GM12878 (cell line): ENCODE measurements at regions of chr2 and their contacts with region 1.

Region 1: GRCh38 chr2:78676921-78677696 is 348.4 kb upstream of the REG3G start:
- DNase-seq: no peak
- ATAC-seq: no peak
- H3K4me3 ChIP-seq: no peak overlapping the region
- H3K27ac ChIP-seq: no peak overlapping the region
- H3K4me1 ChIP-seq: no peaks in the 10 kb centered on the region
- H3K27me3 ChIP-seq: no peaks in the 10 kb centered on the region
- CTCF ChIP-seq: no peak
- EP300 ChIP-seq: no peak
- POLR2A ChIP-seq: no peak
- RAD21 ChIP-seq: no peak

Region 2: GRCh38 chr2:78118037-78118436 is 559.1 kb before region 1 on chr2:
- CTCF ChIA-PET with region 1: no interaction called
- POLR2A ChIA-PET with region 1: no interaction called
- RAD21 ChIA-PET with region 1: no interaction called
- SMC1A ChIA-PET with region 1: no interaction called
- in situ Hi-C with region 1: no loop called
- intact Hi-C with region 1: no loop called
- DNase-seq: no peak
- ATAC-seq: no peak
- H3K4me3 ChIP-seq: no peak overlapping the region
- H3K27ac ChIP-seq: no peak overlapping the region
- H3K4me1 ChIP-seq: no peaks in the 10 kb centered on the region
- H3K27me3 ChIP-seq: no peaks in the 10 kb centered on the region
- CTCF ChIP-seq: no peak
- EP300 ChIP-seq: no peak
- POLR2A ChIP-seq: no peak
- RAD21 ChIP-seq: no peak

Region 3: GRCh38 chr2:78654941-78655340 is 22.2 kb before region 1 on chr2:
- CTCF ChIA-PET with region 1: interaction called, 10 read pairs
- POLR2A ChIA-PET with region 1: no interaction called
- RAD21 ChIA-PET with region 1: no interaction called
- SMC1A ChIA-PET with region 1: no interaction called
- in situ Hi-C with region 1: no loop called
- intact Hi-C with region 1: no loop called
- DNase-seq: no peak
- ATAC-seq: no peak
- H3K4me3 ChIP-seq: no peak overlapping the region
- H3K27ac ChIP-seq: no peak overlapping the region
- H3K4me1 ChIP-seq: no peaks in the 10 kb centered on the region
- H3K27me3 ChIP-seq: no peaks in the 10 kb centered on the region
- CTCF ChIP-seq: no peak
- EP300 ChIP-seq: no peak
- POLR2A ChIP-seq: no peak
- RAD21 ChIP-seq: no peak

Region 4: GRCh38 chr2:78861546-78861945 is 184.4 kb after region 1 on chr2:
- CTCF ChIA-PET with region 1: interaction called, 5 read pairs
- POLR2A ChIA-PET with region 1: no interaction called
- RAD21 ChIA-PET with region 1: interaction called, 5 read pairs
- SMC1A ChIA-PET with region 1: interaction called, 3 read pairs
- in situ Hi-C with region 1: no loop called
- intact Hi-C with region 1: loop called (anchors 1 kb)
- DNase-seq: no peak
- ATAC-seq: peak; percentile 77
- H3K4me3 ChIP-seq: no peak overlapping the region
- H3K27ac ChIP-seq: no peak overlapping the region
- H3K4me1 ChIP-seq: no peaks in the 10 kb centered on the region
- H3K27me3 ChIP-seq: no peaks in the 10 kb centered on the region
- CTCF ChIP-seq: peak; percentile 33 to 52 (median 42); a peak in 5 of 6 replicates
- EP300 ChIP-seq: no peak
- POLR2A ChIP-seq: no peak
- RAD21 ChIP-seq: peak; percentile 42

Region 5: GRCh38 chr2:78999406-78999805 is 322.3 kb after region 1 on chr2:
- CTCF ChIA-PET with region 1: interaction called, 8 read pairs
- POLR2A ChIA-PET with region 1: no interaction called
- RAD21 ChIA-PET with region 1: interaction called, 4 read pairs
- SMC1A ChIA-PET with region 1: interaction called, 3 read pairs
- in situ Hi-C with region 1: no loop called
- intact Hi-C with region 1: loop called (anchors 5 kb)
- DNase-seq: no peak
- ATAC-seq: peak; percentile 65; the same call in 2 of the 3 replicates
- H3K4me3 ChIP-seq: no peak overlapping the region
- H3K27ac ChIP-seq: no peak overlapping the region
- H3K4me1 ChIP-seq: no peaks in the 10 kb centered on the region
- H3K27me3 ChIP-seq: no peaks in the 10 kb centered on the region; a peak in 2 of 4 replicates
- CTCF ChIP-seq: peak; percentile 33 to 44 (median 37); a peak in 5 of 6 replicates
- EP300 ChIP-seq: no peak
- POLR2A ChIP-seq: no peak
- RAD21 ChIP-seq: peak; percentile 56